AG04449 (cell line): ENCODE measurements at regions of chr19 and their contacts with region 1.

Region 1: DNA sequence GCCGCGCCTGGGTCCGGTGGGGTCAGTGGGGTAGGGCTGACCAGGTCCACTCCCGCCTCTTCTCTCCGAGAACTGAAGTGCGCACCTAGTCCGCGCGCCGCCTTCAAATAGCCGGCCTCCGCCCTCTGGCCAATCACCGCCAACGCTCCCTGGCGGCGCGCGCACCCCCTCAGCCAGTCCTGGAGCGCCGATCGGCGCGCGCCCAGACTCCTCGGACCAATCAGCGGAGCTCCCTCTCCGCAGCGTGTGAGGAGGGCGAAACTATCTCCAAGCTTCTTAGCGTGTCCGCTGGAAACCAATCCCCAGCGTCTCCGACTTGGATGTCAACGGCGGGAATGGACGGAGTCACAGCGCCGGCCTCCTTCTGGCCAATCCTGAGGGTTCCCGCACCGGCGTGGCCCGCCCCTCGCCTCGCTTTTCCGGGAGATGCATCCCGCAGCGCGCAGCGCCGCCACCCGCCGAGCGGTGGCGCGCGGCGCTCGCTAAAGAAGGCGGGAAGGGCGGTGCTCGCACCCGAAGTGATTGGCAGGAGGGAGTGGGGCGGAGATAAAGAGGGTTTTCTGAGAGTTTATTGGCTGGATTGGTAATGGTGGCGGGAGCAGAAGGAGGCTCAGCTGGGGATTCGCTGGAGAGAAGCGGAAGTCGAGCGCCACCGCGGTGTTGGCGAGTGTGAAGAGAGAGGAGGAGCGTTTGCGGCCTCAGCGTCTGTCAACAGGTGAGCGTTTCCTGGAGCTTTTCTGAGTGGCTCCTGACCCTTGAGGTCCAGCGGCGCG is at the start of gene ASF1B:
- DNase-seq: peak; percentile 99
- H3K4me3 ChIP-seq: peak within 1 kb of the TSS; percentile 84
- CTCF ChIP-seq: peak; percentile 65

Region 2: GRCh38 chr19:14081325-14082093 is 55.2 kb before region 1 on chr19:
- CTCF ChIA-PET with region 1: interaction called, 12 read pairs
- POLR2A ChIA-PET with region 1: interaction called, 4 read pairs
- DNase-seq: peak; percentile 93
- H3K4me3 ChIP-seq: peak overlapping the region; percentile 81
- CTCF ChIP-seq: no peak

Region 3: GRCh38 chr19:14106840-14107239 is 29.9 kb before region 1 on chr19:
- CTCF ChIA-PET with region 1: no interaction called
- POLR2A ChIA-PET with region 1: no interaction called
- DNase-seq: no peak
- H3K4me3 ChIP-seq: no peak overlapping the region
- CTCF ChIP-seq: no peak

Region 4: DNA sequence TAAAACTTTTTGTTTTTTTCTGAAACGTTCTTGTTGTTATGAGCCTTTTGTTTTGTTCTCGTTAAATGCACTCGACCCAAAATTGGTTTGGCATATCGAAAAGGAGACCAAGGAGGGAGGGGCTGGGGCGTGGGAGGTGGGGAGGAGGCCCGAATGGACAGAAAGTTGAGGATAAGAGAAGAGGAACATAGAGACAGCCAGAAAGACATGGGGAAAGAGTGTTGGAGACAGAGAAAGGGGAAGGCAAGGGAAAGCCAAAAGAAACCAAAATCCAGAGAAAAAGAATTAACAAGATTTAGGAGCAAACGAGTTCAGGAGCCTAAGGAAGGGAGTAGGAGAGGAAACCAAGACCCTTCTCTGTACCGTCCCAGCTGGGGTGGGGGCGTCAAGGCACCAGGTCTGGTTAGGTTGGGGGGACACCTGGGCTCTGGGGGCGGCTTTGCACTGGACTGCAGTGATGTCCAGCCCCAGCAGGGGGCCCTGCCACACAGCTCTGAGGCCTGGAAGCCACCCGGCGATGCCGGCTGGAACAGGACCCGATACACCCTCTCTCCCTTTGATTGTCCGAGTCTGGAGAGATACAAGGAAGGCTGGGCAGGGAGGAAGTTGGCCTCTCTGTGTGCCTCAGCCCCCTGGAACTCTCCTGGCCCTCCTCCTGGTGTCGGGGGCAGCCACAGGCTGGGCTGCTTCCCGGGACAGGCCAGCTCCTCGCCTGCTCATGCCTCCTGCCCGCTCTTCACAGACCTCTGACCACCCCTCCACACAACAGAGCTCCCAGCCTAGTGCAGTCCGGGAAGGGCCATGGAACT is 11.3 kb after region 1 on chr19:
- CTCF ChIA-PET with region 1: interaction called, 77 read pairs
- POLR2A ChIA-PET with region 1: interaction called, 3 read pairs
- DNase-seq: no peak
- H3K4me3 ChIP-seq: no peak overlapping the region
- CTCF ChIP-seq: peak; percentile 91

Region 5: GRCh38 chr19:14472202-14472938 is 335.7 kb after region 1 on chr19:
- CTCF ChIA-PET with region 1: interaction called, 15 read pairs
- POLR2A ChIA-PET with region 1: interaction called, 4 read pairs
- DNase-seq: no peak
- H3K4me3 ChIP-seq: no peak overlapping the region
- CTCF ChIP-seq: peak; percentile 96